PC-3 (cell line): ENCODE measurements at regions of chr1 and their contacts with region 1.

Region 1: GRCh38 chr1:26733982-26734381 is 38.2 kb downstream of the ARID1A start:
- DNase-seq: peak; percentile 86
- ATAC-seq: peak; percentile 75
- H3K4me3 ChIP-seq: no peak overlapping the region; the same call in 1 of the 2 replicates
- H3K27ac ChIP-seq: peak overlapping the region; percentile 40
- H3K4me1 ChIP-seq: peaks cover 27% of the 10 kb centered on the region
- H3K27me3 ChIP-seq: no peaks in the 10 kb centered on the region
- CTCF ChIP-seq: no peak

Region 2: DNA sequence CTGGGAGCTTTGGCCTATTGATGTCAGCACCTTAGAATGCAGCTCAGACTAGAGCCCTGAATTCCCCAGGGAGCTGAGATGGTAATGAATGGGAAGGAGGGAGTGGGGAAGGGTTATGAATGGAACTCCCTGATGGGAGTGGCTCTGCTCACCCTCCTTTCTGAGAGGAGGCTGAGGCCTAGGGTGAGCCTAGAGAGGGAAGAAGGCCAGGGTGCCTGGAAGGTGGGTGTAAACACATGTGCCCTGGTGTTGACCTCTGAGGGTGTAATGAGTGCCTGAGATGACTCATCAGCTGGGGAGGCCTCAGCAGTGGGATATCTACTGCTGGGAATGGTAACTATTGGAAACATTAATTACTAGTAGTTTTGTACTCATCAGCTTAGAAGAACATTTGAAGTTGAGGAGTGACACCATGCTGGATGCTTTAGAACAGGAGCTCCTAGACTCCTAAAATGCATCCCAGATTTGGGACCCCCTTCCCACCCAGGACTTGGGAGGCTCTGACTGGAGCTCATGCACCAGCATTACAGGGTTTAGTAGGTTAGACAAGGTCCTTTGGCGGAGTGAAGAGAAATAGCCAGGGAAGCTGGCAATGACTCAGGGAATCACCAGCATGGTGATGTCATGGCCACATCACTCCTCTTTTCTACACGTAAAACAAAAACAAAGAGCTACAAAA is 37.8 kb after region 1 on chr1:
- CTCF ChIA-PET with region 1: no interaction called
- POLR2A ChIA-PET with region 1: no interaction called
- intact Hi-C with region 1: loop called (anchors 5 kb)
- DNase-seq: peak; percentile 82
- ATAC-seq: peak; percentile 74
- H3K4me3 ChIP-seq: no peak overlapping the region
- H3K27ac ChIP-seq: peak overlapping the region; percentile 74
- H3K4me1 ChIP-seq: peaks cover 45% of the 10 kb centered on the region
- H3K27me3 ChIP-seq: no peaks in the 10 kb centered on the region
- CTCF ChIP-seq: no peak